ENCODE measurements at regions of chr10 and their contacts with region 1.

Region 1: GRCh38 chr10:132458593-132459300 is 61.7 kb downstream of the PWWP2B start:
- DNase-seq: peak; percentile 65
- H3K4me3 Mint-ChIP-seq: no peak overlapping the region
- H3K27ac Mint-ChIP-seq: no peak overlapping the region
- H3K4me1 Mint-ChIP-seq: no peaks in the 10 kb centered on the region
- H3K27me3 Mint-ChIP-seq: no peaks in the 10 kb centered on the region
- CTCF ChIP-seq: peak; percentile 91

Region 2: GRCh38 chr10:132482090-132482800 is 23.5 kb after region 1 on chr10:
- CTCF ChIA-PET with region 1: no interaction called
- intact Hi-C with region 1: no loop called
- DNase-seq: peak; percentile 33
- H3K4me3 Mint-ChIP-seq: no peak overlapping the region
- H3K27ac Mint-ChIP-seq: no peak overlapping the region
- H3K4me1 Mint-ChIP-seq: peaks cover 19% of the 10 kb centered on the region
- H3K27me3 Mint-ChIP-seq: peaks cover 43% of the 10 kb centered on the region
- CTCF ChIP-seq: no peak

Region 3: DNA sequence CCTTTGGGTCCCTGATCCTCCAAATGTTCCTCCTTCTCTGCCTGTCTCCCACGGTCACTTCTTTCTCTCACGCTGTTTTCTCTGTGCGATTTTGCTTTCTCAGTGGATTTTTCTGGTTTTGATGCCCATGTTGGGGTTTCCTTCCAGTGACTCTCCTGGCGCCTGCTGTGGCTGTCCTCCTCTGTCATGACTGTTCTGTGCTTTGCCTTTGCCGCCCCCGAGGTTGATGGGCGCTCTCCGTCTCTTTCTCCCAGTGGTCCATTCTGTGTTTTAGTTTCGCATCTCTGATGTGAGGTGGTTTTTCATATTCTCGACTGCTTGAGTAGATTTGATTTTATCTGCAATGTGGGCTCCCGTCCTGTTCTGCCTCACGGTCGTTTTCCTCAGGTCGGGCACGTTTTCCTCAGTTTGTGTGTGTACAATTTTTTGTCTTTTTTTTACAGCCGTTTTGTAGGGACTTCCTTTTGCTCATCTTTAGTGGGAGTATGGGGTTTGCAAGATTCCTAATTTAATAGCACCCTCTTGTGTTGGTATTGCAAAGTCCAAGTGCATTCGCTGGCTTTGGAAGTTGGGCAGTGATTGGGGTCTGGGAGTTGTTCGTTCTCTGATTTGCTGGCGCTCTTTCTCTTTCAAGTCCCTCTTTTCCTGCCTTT is 178.9 kb after region 1 on chr10:
- CTCF ChIA-PET with region 1: interaction called, 3 read pairs
- intact Hi-C with region 1: loop called (anchors 1 kb)
- DNase-seq: peak; percentile 22
- H3K4me3 Mint-ChIP-seq: no peak overlapping the region
- H3K27ac Mint-ChIP-seq: no peak overlapping the region
- H3K4me1 Mint-ChIP-seq: peaks cover 14% of the 10 kb centered on the region
- H3K27me3 Mint-ChIP-seq: no peaks in the 10 kb centered on the region
- CTCF ChIP-seq: peak; percentile 17